MCF 10A (cell line): ENCODE measurements at regions of chr5 and their contacts with region 1.

Region 1: DNA sequence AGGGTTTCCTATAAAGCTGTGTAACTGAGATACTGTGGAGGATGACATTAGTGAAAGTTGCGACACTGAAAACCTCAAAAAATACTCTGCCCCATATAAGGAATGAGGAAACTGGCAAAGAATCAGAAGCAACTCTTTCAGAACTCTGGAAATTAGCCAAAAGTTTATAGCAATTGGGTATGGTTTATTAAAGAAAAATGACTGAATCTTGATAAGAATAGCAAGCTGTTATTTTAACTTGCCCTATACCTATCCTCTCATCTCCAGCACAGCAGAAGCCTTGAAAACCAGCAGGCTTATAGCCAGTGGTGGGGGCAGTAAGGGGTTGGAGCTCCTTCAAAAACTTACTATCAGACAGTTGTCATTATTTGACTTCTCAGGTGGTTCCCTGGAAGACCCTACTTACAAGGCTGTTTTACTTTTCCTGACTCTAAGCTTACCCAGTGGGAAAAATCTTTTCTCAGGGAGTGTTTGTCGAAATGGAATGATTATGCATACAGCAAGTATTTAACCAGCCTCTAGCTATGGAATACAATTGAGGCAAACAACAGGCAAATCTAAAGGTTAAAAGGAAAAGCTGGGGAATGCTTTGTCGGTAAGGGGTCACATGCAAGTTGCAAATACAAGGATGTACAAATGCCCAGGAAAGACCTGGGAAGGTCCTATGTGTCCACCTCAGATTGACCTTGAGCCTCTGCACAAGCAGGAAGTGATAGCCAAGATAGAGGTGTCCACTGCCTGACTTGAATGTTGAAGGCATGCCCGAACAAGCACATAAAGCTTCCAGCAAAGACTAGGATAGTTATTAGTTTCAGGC is 21.0 kb upstream of the FAM151B start:
- DNase-seq: peak; percentile 56
- H3K4me3 Mint-ChIP-seq: peak overlapping the region; percentile 16
- H3K27ac Mint-ChIP-seq: peak overlapping the region; percentile 96
- H3K4me1 Mint-ChIP-seq: peaks cover 19% of the 10 kb centered on the region
- H3K27me3 Mint-ChIP-seq: no peaks in the 10 kb centered on the region
- CTCF ChIP-seq: no peak

Region 2: DNA sequence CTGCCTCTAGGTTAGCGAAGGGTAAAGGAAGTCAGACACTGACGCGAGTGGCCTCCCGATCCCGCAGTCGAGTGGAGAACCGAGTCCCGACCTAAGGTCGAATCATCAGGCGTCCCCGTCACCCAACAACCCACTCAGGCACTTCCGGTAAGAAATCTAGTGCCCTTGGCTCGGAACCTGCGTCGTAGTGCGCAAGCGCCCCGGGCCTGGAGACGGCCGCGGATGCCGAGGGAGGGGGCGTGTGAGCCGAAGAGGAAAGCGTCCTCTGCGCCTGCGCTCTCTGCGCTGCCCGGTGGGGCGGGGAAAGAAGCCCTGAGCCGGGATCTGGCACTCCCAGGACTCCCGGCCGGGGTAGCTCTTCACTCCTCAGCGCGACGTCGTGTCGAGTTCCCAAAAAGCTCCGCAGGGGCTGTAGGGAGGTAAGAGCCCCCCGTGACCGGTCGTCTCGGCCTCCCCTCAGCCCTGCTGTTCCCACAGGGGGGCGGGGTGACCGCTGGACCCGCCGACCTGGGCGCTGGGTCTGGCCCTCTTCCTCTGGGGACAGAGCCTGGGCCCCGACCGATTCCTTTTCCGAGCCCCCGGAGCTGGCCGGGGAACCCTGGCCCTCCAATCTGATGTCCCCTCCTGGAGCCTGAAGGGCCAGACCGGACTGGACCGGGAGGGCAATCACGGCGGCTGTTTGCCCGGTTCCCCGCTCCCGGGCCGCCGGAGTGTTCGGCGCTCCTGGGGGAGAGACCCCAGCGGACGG is 59.0 kb before region 1 on chr5 and contains the start of gene ZFYVE16:
- CTCF ChIA-PET with region 1: interaction called, 6 read pairs
- POLR2A ChIA-PET with region 1: interaction called, 58 read pairs
- intact Hi-C with region 1: no loop called
- DNase-seq: peak; percentile 97
- H3K4me3 Mint-ChIP-seq: peak within 1 kb of the TSS; percentile 80
- H3K27ac Mint-ChIP-seq: peak within 1 kb of the TSS; percentile 98
- H3K4me1 Mint-ChIP-seq: peaks cover 19% of the 10 kb centered on the region
- H3K27me3 Mint-ChIP-seq: no peaks in the 10 kb centered on the region
- CTCF ChIP-seq: peak; percentile 38
- total RNA-seq, gene ZFYVE16: 34.8 and 36.9 TPM in 2 replicates

Region 3: DNA sequence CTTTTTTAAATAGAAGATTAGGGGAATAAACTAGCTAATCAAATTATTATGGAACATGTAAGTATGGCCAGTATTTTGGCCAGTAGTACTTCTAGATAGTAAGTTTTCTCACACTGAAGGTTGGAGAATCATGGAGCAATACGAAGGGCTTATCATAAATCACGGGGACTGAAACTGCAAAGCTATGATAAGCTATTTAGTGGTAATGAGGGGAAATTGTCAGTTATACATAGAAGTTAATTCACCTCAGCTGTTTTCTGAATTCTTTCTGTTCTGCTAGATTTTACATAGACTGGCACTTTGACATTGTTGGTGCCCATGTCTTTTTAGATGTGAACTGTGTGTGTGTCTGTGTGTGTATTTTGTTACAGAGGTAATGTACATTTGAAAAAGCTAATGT is 13.5 kb before region 1 on chr5:
- CTCF ChIA-PET with region 1: interaction called, 3 read pairs
- POLR2A ChIA-PET with region 1: interaction called, 10 read pairs
- intact Hi-C with region 1: no loop called
- DNase-seq: no peak
- H3K4me3 Mint-ChIP-seq: no peak overlapping the region
- H3K27ac Mint-ChIP-seq: no peak overlapping the region
- H3K4me1 Mint-ChIP-seq: no peaks in the 10 kb centered on the region
- H3K27me3 Mint-ChIP-seq: no peaks in the 10 kb centered on the region
- CTCF ChIP-seq: no peak

Region 4: GRCh38 chr5:80481019-80481893 is 14.4 kb after region 1 on chr5:
- CTCF ChIA-PET with region 1: interaction called, 12 read pairs
- POLR2A ChIA-PET with region 1: interaction called, 52 read pairs
- intact Hi-C with region 1: no loop called
- DNase-seq: peak; percentile 68
- H3K4me3 Mint-ChIP-seq: no peak overlapping the region
- H3K27ac Mint-ChIP-seq: no peak overlapping the region
- H3K4me1 Mint-ChIP-seq: peaks cover 8% of the 10 kb centered on the region
- H3K27me3 Mint-ChIP-seq: no peaks in the 10 kb centered on the region
- CTCF ChIP-seq: peak; percentile 73